Common myeloid progenitor, CD34-positive (primary cell): ENCODE measurements at regions of chr1 and their contacts with region 1.

Region 1: GRCh38 chr1:51296383-51297357 is 33.7 kb downstream of the TTC39A start:
- DNase-seq: peak; percentile 54 to 64 (median 63)
- H3K4me3 ChIP-seq: peak overlapping the region in 6 of 7 experiments; percentile 28 to 77 (median 58)
- H3K27ac ChIP-seq: no peak overlapping the region
- H3K4me1 ChIP-seq: peaks cover 0 to 61% (median 47%) of the 10 kb centered on the region in 4 experiments
- H3K27me3 ChIP-seq: no peaks in the 10 kb centered on the region

Region 2: GRCh38 chr1:51313961-51314777 is 17.5 kb after region 1 on chr1:
- CTCF ChIA-PET with region 1: interaction called, 29 read pairs
- POLR2A ChIA-PET with region 1: no interaction called
- DNase-seq: peak in 1 of 3 donors; percentile 58
- H3K4me3 ChIP-seq: peak overlapping the region in 2 of 7 experiments; percentile 28 to 48
- H3K27ac ChIP-seq: peak overlapping the region; percentile 14 to 64
- H3K4me1 ChIP-seq: peaks cover 2 to 59% (median 55%) of the 10 kb centered on the region in 4 experiments
- H3K27me3 ChIP-seq: no peaks in the 10 kb centered on the region

Region 3: GRCh38 chr1:51324251-51325010 is 27.8 kb after region 1 on chr1:
- CTCF ChIA-PET with region 1: no interaction called
- POLR2A ChIA-PET with region 1: no interaction called
- DNase-seq: no peak
- H3K4me3 ChIP-seq: no peak overlapping the region
- H3K27ac ChIP-seq: no peak overlapping the region
- H3K4me1 ChIP-seq: no peaks in the 10 kb centered on the region
- H3K27me3 ChIP-seq: no peaks in the 10 kb centered on the region

Region 4: DNA sequence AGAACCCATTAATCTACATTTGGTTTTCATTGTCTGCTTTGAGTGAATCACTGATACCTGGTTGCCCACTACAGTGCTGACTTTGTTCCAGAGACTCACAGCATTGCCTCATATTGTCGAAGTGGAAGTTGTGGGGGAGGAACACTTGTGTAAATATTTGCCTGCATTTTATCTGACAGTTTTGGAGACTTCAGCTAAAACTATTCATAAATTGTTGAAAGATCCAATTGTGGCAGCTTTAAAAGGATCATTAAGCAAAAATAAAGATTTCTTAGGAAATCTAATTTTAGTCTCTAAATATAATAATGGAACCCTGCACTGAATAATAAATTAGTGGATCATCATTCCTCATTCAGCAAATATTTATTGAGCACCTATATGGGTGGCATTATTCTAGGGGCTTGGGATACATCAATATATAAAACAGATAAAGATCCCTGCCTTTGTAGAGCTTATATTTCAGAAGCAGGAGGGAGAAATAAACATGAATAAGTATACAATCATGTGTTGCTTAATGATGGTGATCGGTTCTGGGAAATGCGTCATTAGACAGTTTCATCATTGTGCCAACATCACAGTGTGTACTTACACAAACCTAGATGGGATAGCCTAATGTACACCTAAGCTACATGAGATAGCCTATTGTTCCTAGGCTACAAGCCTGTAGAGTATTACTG is 393.8 kb after region 1 on chr1:
- CTCF ChIA-PET with region 1: no interaction called
- POLR2A ChIA-PET with region 1: no interaction called
- DNase-seq: peak in 1 of 3 donors; percentile 17
- H3K4me3 ChIP-seq: no peak overlapping the region
- H3K27ac ChIP-seq: no peak overlapping the region
- H3K4me1 ChIP-seq: peaks cover 0 to 13% (median 6%) of the 10 kb centered on the region in 4 experiments
- H3K27me3 ChIP-seq: no peaks in the 10 kb centered on the region